Right ventricle myocardium inferior (tissue), 1 donor: ENCODE measurements at regions of chr3 and their contacts with region 1.

Region 1: DNA sequence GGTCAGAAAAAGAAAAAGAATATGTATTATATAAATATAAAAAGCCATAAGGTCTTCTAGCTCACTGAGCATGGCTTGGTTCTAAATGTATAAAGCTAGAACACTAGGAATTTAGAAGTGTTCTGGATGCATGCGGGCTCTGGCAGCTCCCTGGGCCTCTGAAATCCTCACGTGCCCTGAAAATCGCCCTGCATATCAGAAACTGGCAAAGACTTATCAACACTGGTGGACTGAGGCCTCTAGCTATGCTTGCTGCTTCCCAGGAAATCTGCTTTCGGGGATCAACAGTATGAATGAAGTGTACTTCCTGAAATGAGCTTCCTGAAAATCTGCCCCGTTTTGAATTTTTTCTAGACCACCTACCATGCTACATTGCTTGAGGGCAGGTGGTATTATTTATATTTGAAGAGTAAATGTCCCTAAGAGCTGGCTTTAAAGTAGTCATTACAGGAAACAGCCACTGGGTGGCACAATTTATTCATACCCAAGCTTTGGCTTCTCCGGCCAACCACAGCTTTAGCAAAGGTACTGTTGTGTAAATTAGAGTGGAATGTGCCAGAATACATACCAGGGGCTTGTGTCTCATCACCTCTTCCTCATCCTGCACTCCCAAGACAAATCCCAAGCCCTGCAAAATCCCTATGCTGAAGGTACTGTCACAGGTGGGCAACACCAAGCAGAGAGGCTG is 17.7 kb downstream of the CRTAP start:
- DNase-seq: no peak
- ATAC-seq: no peak

Region 2: GRCh38 chr3:33006081-33006480 is 125.4 kb before region 1 on chr3:
- intact Hi-C with region 1: no loop called
- DNase-seq: no peak
- ATAC-seq: no peak

Region 3: DNA sequence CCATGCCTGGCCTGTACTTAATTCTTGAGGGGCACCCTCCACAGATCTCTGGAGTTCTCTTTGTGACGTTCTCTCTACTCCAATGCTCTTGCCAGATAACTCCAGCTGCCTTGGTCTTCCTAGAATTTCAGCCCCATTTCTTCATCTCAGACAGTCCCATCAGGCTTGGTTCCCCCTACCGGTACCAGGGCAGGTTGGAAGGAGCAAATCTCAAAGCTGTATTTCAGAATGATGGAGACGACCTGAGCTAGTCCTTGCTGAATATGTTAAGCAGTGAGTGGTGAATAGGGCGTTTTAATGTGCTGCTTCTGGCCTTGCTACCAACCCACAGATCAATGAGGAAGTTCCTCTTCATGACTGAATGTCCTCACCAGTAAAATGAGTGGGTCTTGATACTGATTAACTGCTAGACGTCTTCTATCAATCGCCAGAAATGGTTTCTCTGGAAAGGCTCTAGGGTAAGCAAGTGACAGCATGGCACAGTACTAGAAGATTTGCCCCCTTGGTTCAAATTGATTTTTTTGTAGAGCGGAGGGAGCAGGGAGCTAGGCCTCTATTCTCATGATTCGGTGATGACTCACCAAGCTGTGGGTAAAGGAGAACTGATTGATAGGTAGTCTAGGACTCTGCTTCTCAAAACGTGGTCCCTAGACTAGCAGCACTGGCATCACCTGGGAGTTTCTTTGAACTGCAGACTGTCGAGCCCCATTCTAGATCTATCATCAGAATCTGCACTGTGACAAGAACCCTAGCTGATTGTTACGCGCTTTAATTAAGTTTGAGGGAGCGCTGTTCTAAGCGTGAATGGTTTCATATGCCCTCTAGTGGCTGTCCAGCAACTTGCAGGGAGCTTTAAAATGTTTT is 241.0 kb after region 1 on chr3:
- intact Hi-C with region 1: loop called (anchors 1 kb)
- DNase-seq: no peak
- ATAC-seq: peak; percentile 42

Region 4: DNA sequence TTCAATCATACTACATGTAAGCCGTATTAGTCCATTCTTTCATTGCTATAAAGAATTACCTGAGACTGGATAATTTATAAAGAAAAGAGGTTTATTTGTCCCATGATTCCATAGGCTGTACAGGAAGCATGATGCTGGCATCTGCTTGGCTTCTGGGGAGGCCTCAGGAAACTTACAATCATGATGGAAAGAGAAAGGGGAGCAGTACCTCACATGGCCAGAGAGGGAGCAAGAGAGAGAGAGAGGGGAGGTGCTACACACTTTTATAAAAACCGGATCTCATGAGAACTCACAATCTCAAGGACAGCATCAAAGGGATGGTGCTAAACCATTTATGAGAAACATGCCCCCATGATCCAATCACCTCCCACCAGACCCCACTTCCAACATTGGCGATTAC is 600.9 kb after region 1 on chr3:
- intact Hi-C with region 1: no loop called
- DNase-seq: no peak
- ATAC-seq: no peak